Heart left ventricle (tissue), 16 donors: ENCODE measurements at regions of chr5 and their contacts with region 1.

Region 1: GRCh38 chr5:14351845-14352712 is 208.9 kb downstream of the TRIO start:
- DNase-seq: peak; percentile 57 to 73 (median 63)
- ATAC-seq: peak; percentile 64 to 89 (median 86)
- H3K4me3 ChIP-seq: no peak overlapping the region
- H3K27ac ChIP-seq: no peak overlapping the region
- H3K4me1 ChIP-seq: peaks cover 0 to 43% (median 12%) of the 10 kb centered on the region in 12 donors
- H3K27me3 ChIP-seq: no peaks in the 10 kb centered on the region
- CTCF ChIP-seq: peak; percentile 92 to 99 (median 96)
- POLR2A ChIP-seq: no peak

Region 2: GRCh38 chr5:13987843-13988464 is 364.1 kb before region 1 on chr5:
- intact Hi-C with region 1: loop called in 3 of 10 experiments (anchors 5 to 10 kb)
- DNase-seq: peak in 2 of 5 donors; percentile 24 to 44
- ATAC-seq: peak in 3 of 4 donors; percentile 54 to 80 (median 67)
- H3K4me3 ChIP-seq: no peak overlapping the region
- H3K27ac ChIP-seq: no peak overlapping the region
- H3K4me1 ChIP-seq: peaks cover 0 to 6% (median 0%) of the 10 kb centered on the region in 12 donors
- H3K27me3 ChIP-seq: peaks cover 0 to 7% (median 0%) of the 10 kb centered on the region in 9 donors
- CTCF ChIP-seq: peak; percentile 62 to 93 (median 86)
- POLR2A ChIP-seq: no peak

Region 3: GRCh38 chr5:14011089-14012004 is 340.7 kb before region 1 on chr5:
- intact Hi-C with region 1: loop called in 1 of 10 experiments (anchors 10 kb)
- DNase-seq: peak; percentile 85 to 93 (median 91)
- ATAC-seq: peak; percentile 74 to 96 (median 94)
- H3K4me3 ChIP-seq: peak overlapping the region; percentile 8 to 65 (median 59)
- H3K27ac ChIP-seq: peak overlapping the region in 11 of 12 donors; percentile 2 to 75 (median 48)
- H3K4me1 ChIP-seq: peaks cover 0 to 15% (median 6%) of the 10 kb centered on the region in 12 donors
- H3K27me3 ChIP-seq: peaks cover 0 to 13% (median 0%) of the 10 kb centered on the region in 9 donors
- CTCF ChIP-seq: peak in 4 of 12 donors; percentile 10 to 36 (median 26)
- POLR2A ChIP-seq: peak in 1 of 2 donors; percentile 35

Region 4: GRCh38 chr5:14174230-14174637 is 177.8 kb before region 1 on chr5:
- intact Hi-C with region 1: no loop called
- DNase-seq: no peak
- ATAC-seq: peak in 3 of 4 donors; percentile 15 to 40 (median 18)
- H3K4me3 ChIP-seq: no peak overlapping the region
- H3K27ac ChIP-seq: peak overlapping the region in 2 of 12 donors; percentile 3 to 23
- H3K4me1 ChIP-seq: peaks cover 3 to 71% (median 50%) of the 10 kb centered on the region in 12 donors
- H3K27me3 ChIP-seq: no peaks in the 10 kb centered on the region
- CTCF ChIP-seq: no peak
- POLR2A ChIP-seq: no peak

Region 5: DNA sequence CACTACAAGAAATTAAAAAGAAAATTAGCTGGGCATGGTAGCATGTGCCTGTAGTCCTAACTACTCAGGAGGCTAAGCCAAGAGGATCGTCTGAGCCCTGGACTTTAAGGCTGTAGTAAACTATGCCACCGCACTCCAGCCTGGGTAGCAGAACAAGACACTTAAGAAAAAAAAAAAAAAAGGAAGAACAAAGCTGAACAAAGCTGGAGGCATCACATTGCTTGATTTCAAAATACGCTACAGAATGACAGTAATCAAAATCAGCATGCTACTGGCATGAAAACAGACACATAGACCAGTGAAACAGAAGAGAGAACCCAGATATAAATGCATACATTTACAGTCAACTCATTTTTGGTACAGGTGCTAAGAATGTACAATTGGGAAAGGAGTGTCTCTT is 298.0 kb after region 1 on chr5:
- intact Hi-C with region 1: loop called in 7 of 10 experiments (anchors 1 to 10 kb)
- DNase-seq: no peak
- ATAC-seq: no peak
- H3K4me3 ChIP-seq: no peak overlapping the region
- H3K27ac ChIP-seq: no peak overlapping the region
- H3K4me1 ChIP-seq: peaks cover 0 to 4% (median 0%) of the 10 kb centered on the region in 12 donors
- H3K27me3 ChIP-seq: peaks cover 0 to 2% (median 0%) of the 10 kb centered on the region in 9 donors
- CTCF ChIP-seq: no peak
- POLR2A ChIP-seq: no peak

Region 6: GRCh38 chr5:14664302-14665100 is 312.4 kb after region 1 on chr5 and contains the start of gene OTULIN:
- intact Hi-C with region 1: loop called in 1 of 10 experiments (anchors 5 kb)
- DNase-seq: peak; percentile 92 to 97 (median 94)
- ATAC-seq: peak; percentile 93 to 98 (median 96)
- H3K4me3 ChIP-seq: peak within 1 kb of the TSS; percentile 46 to 88 (median 74)
- H3K27ac ChIP-seq: peak within 1 kb of the TSS; percentile 80 to 98 (median 91)
- H3K4me1 ChIP-seq: peaks cover 0 to 53% (median 40%) of the 10 kb centered on the region in 12 donors
- H3K27me3 ChIP-seq: no peaks in the 10 kb centered on the region
- CTCF ChIP-seq: no peak
- POLR2A ChIP-seq: peak; percentile 9 to 93
- total RNA-seq, gene OTULIN: 19.3 to 42.0 (median 27.5) TPM